A549 (cell line): ENCODE measurements at regions of chr15 and their contacts with region 1.

Region 1: GRCh38 chr15:57541805-57542504 is 49.7 kb upstream of the MYZAP start:
- DNase-seq: peak; percentile 74 to 77
- ATAC-seq: peak; percentile 68 to 88
- H3K4me3 ChIP-seq: no peak overlapping the region
- H3K27ac ChIP-seq: no peak overlapping the region
- H3K4me1 ChIP-seq: peaks cover 4% of the 10 kb centered on the region; the same call in 2 of the 3 replicates
- CTCF ChIP-seq: peak; percentile 90
- EP300 ChIP-seq: no peak
- POLR2A ChIP-seq: no peak
- RAD21 ChIP-seq: peak; percentile 75 to 84

Region 2: DNA sequence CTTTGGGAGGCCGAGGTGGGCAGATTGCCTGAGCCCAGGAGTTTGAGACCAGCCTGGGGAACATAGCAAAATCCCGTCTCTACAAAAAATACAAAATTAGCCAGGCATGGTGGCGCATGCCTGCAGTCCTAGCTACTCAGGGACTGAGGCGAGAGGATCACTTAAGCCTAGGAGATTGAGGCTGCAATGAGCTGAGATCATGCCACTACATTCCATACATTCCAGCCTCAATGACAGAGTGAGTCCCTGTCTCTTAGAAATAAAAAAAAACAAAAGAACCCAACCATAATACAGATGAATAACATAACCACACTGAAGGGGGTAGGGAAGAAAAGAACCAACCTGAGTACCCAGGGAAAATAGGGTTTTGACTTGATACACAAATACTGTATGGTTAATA is 185.3 kb before region 1 on chr15:
- CTCF ChIA-PET with region 1: interaction called, 15 read pairs
- POLR2A ChIA-PET with region 1: no interaction called
- DNase-seq: no peak
- ATAC-seq: peak in 1 of 2 experiments; percentile 40; a peak in 2 of 6 replicates
- H3K4me3 ChIP-seq: no peak overlapping the region
- H3K27ac ChIP-seq: no peak overlapping the region
- H3K4me1 ChIP-seq: no peaks in the 10 kb centered on the region
- CTCF ChIP-seq: no peak
- EP300 ChIP-seq: no peak
- POLR2A ChIP-seq: no peak
- RAD21 ChIP-seq: no peak

Region 3: GRCh38 chr15:57364282-57365007 is 177.5 kb before region 1 on chr15:
- CTCF ChIA-PET with region 1: interaction called, 13 read pairs
- POLR2A ChIA-PET with region 1: no interaction called
- DNase-seq: no peak
- ATAC-seq: peak; percentile 66 to 69; a peak in 4 of 6 replicates
- H3K4me3 ChIP-seq: no peak overlapping the region
- H3K27ac ChIP-seq: no peak overlapping the region
- H3K4me1 ChIP-seq: no peaks in the 10 kb centered on the region
- CTCF ChIP-seq: no peak
- EP300 ChIP-seq: no peak
- POLR2A ChIP-seq: no peak
- RAD21 ChIP-seq: no peak

Region 4: GRCh38 chr15:57455929-57456328 is 86.0 kb before region 1 on chr15:
- CTCF ChIA-PET with region 1: no interaction called
- POLR2A ChIA-PET with region 1: no interaction called
- DNase-seq: no peak
- ATAC-seq: no peak
- H3K4me3 ChIP-seq: no peak overlapping the region
- H3K27ac ChIP-seq: no peak overlapping the region
- H3K4me1 ChIP-seq: no peaks in the 10 kb centered on the region
- CTCF ChIP-seq: no peak
- EP300 ChIP-seq: no peak
- POLR2A ChIP-seq: no peak
- RAD21 ChIP-seq: no peak

Region 5: GRCh38 chr15:57522148-57522547 is 19.8 kb before region 1 on chr15:
- CTCF ChIA-PET with region 1: interaction called, 178 read pairs
- POLR2A ChIA-PET with region 1: no interaction called
- DNase-seq: no peak
- ATAC-seq: no peak
- H3K4me3 ChIP-seq: no peak overlapping the region
- H3K27ac ChIP-seq: no peak overlapping the region
- H3K4me1 ChIP-seq: peaks cover 1% of the 10 kb centered on the region; the same call in 2 of the 3 replicates
- CTCF ChIP-seq: no peak
- EP300 ChIP-seq: no peak
- POLR2A ChIP-seq: no peak
- RAD21 ChIP-seq: no peak